ENCODE measurements at regions of chr5 and their contacts with region 1.

Region 1: GRCh38 chr5:151252762-151253604 is at the start of gene GM2A:
- DNase-seq: peak; percentile 99
- ATAC-seq: peak; percentile 93
- H3K4me3 ChIP-seq: peak within 1 kb of the TSS; percentile 83 to 87 (median 84)
- H3K27ac ChIP-seq: peak within 1 kb of the TSS; percentile 84
- H3K4me1 ChIP-seq: peaks cover 41% of the 10 kb centered on the region
- H3K27me3 ChIP-seq: no peaks in the 10 kb centered on the region; a peak in 1 of 5 replicates
- CTCF ChIP-seq: no peak
- EP300 ChIP-seq: no peak
- POLR2A ChIP-seq: peak; percentile 90 to 98
- RAD21 ChIP-seq: no peak
- total RNA-seq, gene GM2A: 16.6 and 29.6 TPM in 2 replicates

Region 2: DNA sequence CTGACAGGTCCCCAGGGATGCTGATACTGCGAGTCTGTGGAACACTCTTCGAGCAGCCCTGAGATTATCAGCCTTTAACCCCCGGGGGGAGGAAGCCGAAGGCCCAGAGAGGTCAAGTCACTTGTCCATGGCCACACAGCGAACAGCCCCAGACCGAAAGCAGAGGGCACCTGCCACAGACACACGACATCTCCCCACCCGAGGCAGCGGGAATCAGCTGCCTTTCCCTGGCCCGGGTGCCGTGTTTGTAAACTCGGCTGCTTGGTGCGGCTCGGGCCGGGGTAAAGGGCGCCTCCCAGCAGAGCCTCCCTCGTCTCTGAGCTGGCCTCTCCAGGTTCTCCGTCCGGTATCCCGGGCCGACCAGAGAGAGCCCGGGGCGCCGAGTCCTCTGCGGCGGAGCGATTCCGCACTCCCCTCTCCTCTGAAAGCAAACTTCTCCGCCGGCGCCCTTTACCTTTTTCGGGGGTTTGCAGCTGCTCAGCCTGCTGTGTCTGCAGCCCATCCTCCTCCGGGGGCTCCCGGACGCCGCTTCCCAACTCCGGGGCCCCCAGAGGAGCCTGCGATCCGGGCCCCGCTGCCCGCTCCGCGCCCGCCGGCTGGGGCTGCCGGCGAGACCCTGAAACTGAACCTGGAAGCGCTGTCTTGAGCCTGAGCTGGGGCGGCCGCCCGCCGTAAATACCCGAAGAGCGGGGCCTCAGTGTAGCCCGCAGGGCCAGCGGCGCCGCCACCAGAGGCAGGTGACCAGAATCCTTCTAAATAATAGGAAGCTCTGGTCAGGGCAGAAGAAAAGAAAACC is 29.3 kb before region 1 on chr5 and contains the start of gene CCDC69:
- CTCF ChIA-PET with region 1: no interaction called
- POLR2A ChIA-PET with region 1: interaction called, 36 read pairs
- in situ Hi-C with region 1: no loop called
- intact Hi-C with region 1: loop called (anchors 1 kb)
- DNase-seq: peak; percentile 52
- ATAC-seq: peak; percentile 95
- H3K4me3 ChIP-seq: peak within 1 kb of the TSS; percentile 81 to 90 (median 87)
- H3K27ac ChIP-seq: peak within 1 kb of the TSS; percentile 66
- H3K4me1 ChIP-seq: peaks cover 29% of the 10 kb centered on the region
- H3K27me3 ChIP-seq: no peaks in the 10 kb centered on the region; a peak in 1 of 5 replicates
- CTCF ChIP-seq: 0 out of 2 replicates have a peak, but pooled peaks have one; percentile 21
- EP300 ChIP-seq: no peak
- POLR2A ChIP-seq: peak; percentile 58 to 67
- RAD21 ChIP-seq: peak; percentile 41; the same call in 1 of the 2 replicates
- total RNA-seq, gene CCDC69: 45.2 and 46.3 TPM in 2 replicates

Region 3: GRCh38 chr5:151298063-151298855 is 45.3 kb after region 1 on chr5:
- CTCF ChIA-PET with region 1: interaction called, 4 read pairs
- POLR2A ChIA-PET with region 1: no interaction called
- in situ Hi-C with region 1: no loop called
- intact Hi-C with region 1: loop called (anchors 2 kb)
- DNase-seq: peak; percentile 68
- ATAC-seq: peak; percentile 96
- H3K4me3 ChIP-seq: no peak overlapping the region
- H3K27ac ChIP-seq: no peak overlapping the region
- H3K4me1 ChIP-seq: no peaks in the 10 kb centered on the region
- H3K27me3 ChIP-seq: peaks cover 0 to 6% of the 10 kb centered on the region in 2 experiments; a peak in 1 of 5 replicates
- CTCF ChIP-seq: peak; percentile 66
- EP300 ChIP-seq: no peak
- POLR2A ChIP-seq: no peak
- RAD21 ChIP-seq: no peak

Region 4: DNA sequence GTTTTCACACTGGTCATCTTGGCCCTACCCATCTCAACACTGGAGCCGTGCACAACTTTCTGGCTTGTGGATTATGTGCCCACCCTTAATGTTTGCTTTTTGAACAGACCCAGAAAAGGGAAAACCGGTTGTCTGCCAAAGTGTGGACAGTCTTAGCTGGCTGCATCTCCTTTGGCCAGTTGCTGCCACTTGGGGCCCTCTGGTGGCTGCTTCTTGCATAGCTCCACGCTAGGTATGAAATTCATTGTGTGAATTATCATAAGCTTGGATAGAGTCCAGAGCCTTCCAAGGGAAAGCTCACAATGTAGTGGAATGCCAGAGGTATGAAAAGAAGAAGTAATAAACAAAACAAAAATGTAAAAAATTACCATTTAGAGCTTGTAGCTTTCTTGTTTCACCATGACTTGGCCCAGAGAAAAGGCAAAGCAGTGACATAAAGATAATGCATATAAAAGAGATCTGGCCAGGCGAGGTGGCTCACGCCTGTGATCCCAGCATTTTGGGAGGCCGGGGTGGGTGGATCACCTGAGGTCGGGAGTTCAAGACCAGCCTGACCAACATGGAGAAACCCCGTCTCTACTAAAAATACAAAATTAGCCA is 63.1 kb after region 1 on chr5:
- CTCF ChIA-PET with region 1: interaction called, 3 read pairs
- POLR2A ChIA-PET with region 1: interaction called, 7 read pairs
- in situ Hi-C with region 1: no loop called
- intact Hi-C with region 1: loop called (anchors 1 kb)
- DNase-seq: peak; percentile 37
- ATAC-seq: peak; percentile 95
- H3K4me3 ChIP-seq: no peak overlapping the region
- H3K27ac ChIP-seq: no peak overlapping the region
- H3K4me1 ChIP-seq: no peaks in the 10 kb centered on the region
- H3K27me3 ChIP-seq: no peaks in the 10 kb centered on the region
- CTCF ChIP-seq: peak; percentile 84
- EP300 ChIP-seq: no peak
- POLR2A ChIP-seq: no peak
- RAD21 ChIP-seq: peak; percentile 50; the same call in 1 of the 2 replicates

Region 5: DNA sequence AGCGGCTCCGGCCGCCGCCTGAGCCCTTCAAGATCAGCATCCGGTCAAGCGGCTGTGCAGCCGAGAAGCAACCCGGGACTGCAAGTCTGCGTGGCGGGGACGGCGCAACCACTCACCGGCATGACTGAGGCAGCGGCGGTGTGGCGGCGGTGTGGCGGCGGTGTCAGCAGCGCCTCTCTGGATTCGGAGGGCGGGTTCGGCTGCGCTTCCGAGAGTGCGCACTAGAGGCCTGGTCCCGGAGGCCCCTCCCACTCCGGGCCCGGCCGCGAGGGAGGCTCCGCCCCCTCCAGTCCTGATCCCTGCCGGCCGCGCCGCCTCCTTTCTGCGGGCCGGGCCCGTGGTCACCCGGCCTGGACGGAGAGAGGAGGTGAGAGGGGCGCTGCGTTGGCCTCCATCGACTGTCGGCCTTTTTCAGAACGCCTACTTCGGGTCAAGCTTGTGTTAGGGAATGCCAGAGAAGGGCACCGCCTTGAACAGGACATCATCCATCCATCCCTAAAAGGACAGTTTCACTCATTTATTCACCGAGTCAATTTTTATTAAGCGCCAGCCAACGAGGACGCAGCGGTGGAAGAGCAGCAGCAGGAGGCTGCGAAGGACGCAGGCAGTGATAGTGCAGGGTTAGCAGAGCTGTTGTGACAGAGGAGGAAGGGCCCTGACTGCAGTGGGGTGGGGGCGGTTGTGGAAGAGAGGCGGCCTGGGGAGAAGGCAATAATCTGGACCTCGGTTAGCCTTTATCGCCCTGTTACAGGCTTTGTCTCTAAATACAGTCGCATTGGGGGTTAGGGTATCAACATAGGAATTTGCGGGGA is 505.7 kb after region 1 on chr5 and contains the start of gene ATOX1:
- CTCF ChIA-PET with region 1: no interaction called
- POLR2A ChIA-PET with region 1: no interaction called
- in situ Hi-C with region 1: no loop called
- intact Hi-C with region 1: loop called (anchors 5 kb)
- DNase-seq: peak; percentile 85
- ATAC-seq: peak; percentile 91
- H3K4me3 ChIP-seq: peak within 1 kb of the TSS; percentile 69 to 91 (median 82)
- H3K27ac ChIP-seq: peak within 1 kb of the TSS; percentile 68
- H3K4me1 ChIP-seq: peaks cover 54% of the 10 kb centered on the region
- H3K27me3 ChIP-seq: no peaks in the 10 kb centered on the region
- CTCF ChIP-seq: peak; percentile 41
- EP300 ChIP-seq: no peak
- POLR2A ChIP-seq: peak; percentile 82 to 96
- RAD21 ChIP-seq: no peak; the same call in 1 of the 2 replicates
- total RNA-seq, gene ATOX1: 124 and 146 TPM in 2 replicates

Region 6: DNA sequence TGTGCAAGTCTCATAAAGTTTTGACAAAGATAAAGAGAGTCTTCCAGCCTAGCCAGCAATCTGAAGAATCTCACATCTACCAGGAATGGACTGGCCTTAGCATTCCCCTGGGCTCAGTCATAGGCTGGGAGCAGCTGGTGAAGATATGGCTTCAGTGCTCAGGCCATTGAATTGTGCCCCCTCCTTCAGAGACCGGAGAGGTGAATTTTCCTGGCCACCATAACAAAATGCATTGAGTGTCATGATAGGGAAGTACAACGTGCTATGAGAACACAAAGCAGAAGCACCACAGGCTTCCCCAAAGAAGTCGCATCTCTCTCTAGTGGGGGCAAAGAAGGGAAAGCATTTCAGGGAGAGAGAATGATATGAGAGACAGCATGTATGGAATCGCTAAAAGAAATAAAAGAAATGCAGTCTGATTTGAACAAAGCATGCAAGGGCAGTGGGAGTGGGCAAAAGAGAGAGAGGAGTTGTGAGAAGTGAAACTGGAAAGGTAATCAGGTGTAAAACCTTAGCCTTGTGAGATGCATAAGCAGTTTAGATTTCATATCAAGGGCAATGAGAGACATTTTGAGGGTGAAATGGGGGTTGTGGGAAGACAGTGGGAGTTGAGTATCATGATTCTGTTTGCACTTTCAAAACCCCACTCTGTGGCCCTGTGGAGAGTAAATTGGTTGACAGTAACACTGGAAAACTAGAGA is 1209.2 kb after region 1 on chr5:
- CTCF ChIA-PET with region 1: no interaction called
- POLR2A ChIA-PET with region 1: no interaction called
- in situ Hi-C with region 1: no loop called
- intact Hi-C with region 1: no loop called
- DNase-seq: no peak
- ATAC-seq: peak; percentile 69
- H3K4me3 ChIP-seq: no peak overlapping the region
- H3K27ac ChIP-seq: no peak overlapping the region
- H3K4me1 ChIP-seq: no peaks in the 10 kb centered on the region
- H3K27me3 ChIP-seq: no peaks in the 10 kb centered on the region
- CTCF ChIP-seq: peak; percentile 44
- EP300 ChIP-seq: no peak
- POLR2A ChIP-seq: no peak
- RAD21 ChIP-seq: no peak

Measured in HepG2 (cell line).